CD4-positive, alpha-beta T cell (primary cell): ENCODE measurements at regions of chr3 and their contacts with region 1.

Region 1: DNA sequence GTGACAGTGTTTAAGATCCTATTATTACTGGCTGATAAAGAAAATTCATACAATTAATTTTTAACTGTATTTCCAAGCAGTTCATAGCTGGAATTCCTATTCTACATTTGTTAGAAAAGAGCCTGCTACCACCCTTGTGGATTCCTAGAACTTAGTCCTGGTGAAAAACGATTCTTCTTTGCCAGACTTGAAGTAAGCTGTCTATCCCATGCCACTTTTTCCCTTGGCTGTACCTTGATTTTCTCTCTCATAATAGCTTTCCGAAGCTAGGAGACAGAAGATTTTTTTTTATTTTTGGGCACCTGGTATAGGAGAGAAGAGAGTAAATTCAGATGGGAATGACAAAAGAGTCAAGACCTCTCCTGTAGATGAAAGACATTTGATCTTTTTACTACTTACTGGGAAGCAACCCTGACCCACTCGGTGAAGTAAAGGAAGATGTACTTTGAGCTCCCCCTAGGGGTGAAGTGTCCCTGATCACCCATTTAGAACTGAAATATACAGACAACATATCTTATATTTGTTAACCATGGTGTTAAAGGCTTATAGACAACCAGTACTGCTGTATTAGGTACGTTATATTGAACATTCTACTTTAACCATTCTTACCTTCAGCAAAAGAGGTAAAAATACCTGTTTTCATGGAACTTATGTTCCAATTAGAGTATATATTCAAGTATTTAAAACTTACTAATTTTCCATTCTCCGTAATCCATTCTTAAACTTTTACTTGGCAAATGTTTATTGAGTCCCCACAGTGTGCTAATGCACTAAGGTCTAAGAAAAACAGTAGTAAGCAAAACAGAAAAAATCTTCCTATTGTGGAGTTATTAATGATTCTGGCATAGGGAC is 36.2 kb upstream of the C3orf38 start:
- DNase-seq: peak in 13 of 14 experiments; percentile 4 to 84 (median 47)
- ATAC-seq: peak; percentile 96
- H3K4me3 ChIP-seq: no peak overlapping the region
- H3K4me3 Mint-ChIP-seq: no peak overlapping the region
- H3K27ac ChIP-seq: no peak overlapping the region
- H3K27ac Mint-ChIP-seq: peak overlapping the region; percentile 14
- H3K4me1 ChIP-seq: no peaks in the 10 kb centered on the region
- H3K4me1 Mint-ChIP-seq: peaks cover 30% of the 10 kb centered on the region
- H3K27me3 ChIP-seq: no peaks in the 10 kb centered on the region
- H3K27me3 Mint-ChIP-seq: no peaks in the 10 kb centered on the region
- CTCF ChIP-seq: peak; percentile 92

Region 2: DNA sequence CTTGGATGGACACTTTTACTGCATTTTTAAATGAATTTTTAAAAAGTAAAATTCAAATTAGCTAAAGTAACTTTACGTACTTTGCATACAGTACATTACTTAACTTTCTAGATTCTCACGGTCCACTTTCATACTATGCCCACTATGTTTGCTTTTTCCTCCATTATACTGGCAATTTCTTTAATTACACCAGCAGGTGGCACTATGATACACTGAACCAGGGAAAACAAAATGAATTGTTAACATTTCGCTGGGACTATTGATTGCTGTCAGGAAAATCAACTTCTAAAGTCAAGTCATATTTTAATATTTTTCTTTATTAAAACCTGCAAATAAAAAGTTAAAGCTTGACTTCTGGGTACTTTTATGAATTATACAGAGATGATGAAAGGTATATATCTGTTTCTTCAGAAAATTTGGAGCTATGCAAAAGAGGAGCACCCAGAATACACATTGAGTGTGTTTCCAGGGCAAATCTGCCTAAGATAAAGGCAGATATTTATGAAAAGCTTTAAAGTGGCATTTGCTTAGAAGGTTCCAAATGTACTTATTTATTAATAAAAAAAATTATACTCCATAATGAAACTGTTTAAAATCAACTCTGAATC is 815.3 kb before region 1 on chr3:
- CTCF ChIA-PET with region 1: no interaction called
- POLR2A ChIA-PET with region 1: no interaction called
- intact Hi-C with region 1: loop called in 1 of 2 experiments (anchors 1 kb)
- DNase-seq: peak in 3 of 14 experiments; percentile 34 to 49 (median 45)
- ATAC-seq: peak; percentile 59
- H3K4me3 ChIP-seq: no peak overlapping the region
- H3K4me3 Mint-ChIP-seq: no peak overlapping the region
- H3K27ac ChIP-seq: no peak overlapping the region
- H3K27ac Mint-ChIP-seq: no peak overlapping the region
- H3K4me1 ChIP-seq: no peaks in the 10 kb centered on the region
- H3K4me1 Mint-ChIP-seq: peaks cover 5% of the 10 kb centered on the region
- H3K27me3 ChIP-seq: no peaks in the 10 kb centered on the region
- H3K27me3 Mint-ChIP-seq: no peaks in the 10 kb centered on the region
- CTCF ChIP-seq: peak; percentile 90

Region 3: DNA sequence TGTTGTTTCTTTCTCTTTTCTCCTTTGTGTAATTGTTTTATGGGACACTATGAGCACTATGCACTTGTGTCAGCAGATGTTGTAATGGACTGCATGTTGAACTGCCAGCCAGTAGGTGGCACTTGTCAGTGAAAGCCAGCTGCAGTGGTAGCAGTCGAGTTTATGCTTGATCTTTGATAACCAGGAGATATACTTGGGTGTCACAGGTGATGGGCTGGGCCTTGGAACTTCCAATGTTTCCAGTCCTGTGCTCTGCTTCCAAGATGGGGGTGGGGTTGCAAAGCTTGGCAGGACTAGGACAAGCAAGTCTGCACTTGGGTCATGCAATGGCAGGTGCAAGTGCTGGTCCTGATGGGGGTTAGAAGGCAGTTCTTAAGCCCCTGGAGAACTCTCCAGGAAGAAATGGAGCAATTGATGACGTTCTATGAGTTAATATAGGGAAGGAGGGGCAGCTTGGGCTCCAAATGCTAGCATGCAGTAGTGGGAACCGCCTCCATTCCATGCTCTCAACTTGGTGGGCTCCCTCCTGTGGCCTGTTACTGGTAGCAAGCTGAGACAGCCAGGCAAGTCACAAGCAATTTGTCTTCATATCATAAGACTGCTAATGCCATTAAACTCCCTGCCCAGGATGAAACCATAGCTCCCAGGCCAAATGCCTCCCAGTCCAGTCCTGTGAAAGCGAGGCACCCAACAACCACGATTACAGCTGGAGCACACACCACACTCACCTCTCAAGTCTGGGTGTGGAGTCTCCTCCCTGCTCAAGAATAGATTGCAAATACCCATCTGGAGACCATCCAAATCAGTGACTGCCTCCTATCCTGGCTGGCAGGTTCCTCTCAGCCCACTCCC is 342.0 kb before region 1 on chr3:
- CTCF ChIA-PET with region 1: no interaction called
- POLR2A ChIA-PET with region 1: no interaction called
- intact Hi-C with region 1: loop called (anchors 1 to 5 kb)
- DNase-seq: peak in 12 of 14 experiments; percentile 6 to 70 (median 27)
- ATAC-seq: peak; percentile 78
- H3K4me3 ChIP-seq: no peak overlapping the region
- H3K4me3 Mint-ChIP-seq: no peak overlapping the region
- H3K27ac ChIP-seq: no peak overlapping the region
- H3K27ac Mint-ChIP-seq: no peak overlapping the region
- H3K4me1 ChIP-seq: no peaks in the 10 kb centered on the region
- H3K4me1 Mint-ChIP-seq: no peaks in the 10 kb centered on the region
- H3K27me3 ChIP-seq: no peaks in the 10 kb centered on the region
- H3K27me3 Mint-ChIP-seq: peaks cover 15% of the 10 kb centered on the region
- CTCF ChIP-seq: peak; percentile 64

Region 4: DNA sequence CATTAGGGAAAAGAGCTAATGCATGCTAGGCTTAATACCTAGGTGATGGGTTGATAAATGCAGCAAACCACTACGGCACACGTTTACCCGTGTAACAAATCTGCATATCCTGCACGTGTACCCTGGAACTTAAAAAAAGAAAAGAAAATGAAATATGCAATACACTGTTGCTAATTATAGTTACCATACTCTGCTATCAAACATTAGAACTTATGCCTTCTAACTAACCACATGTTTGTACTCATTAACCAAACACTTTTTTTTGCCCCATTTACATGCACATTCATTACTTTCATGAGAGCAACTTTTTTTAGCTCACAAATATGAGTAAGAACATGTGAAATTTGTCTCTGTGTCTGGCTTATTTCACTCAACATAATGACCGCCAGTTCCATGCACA is 307.9 kb before region 1 on chr3:
- CTCF ChIA-PET with region 1: no interaction called
- POLR2A ChIA-PET with region 1: no interaction called
- intact Hi-C with region 1: no loop called
- DNase-seq: no peak
- ATAC-seq: no peak
- H3K4me3 ChIP-seq: no peak overlapping the region
- H3K4me3 Mint-ChIP-seq: no peak overlapping the region
- H3K27ac ChIP-seq: no peak overlapping the region
- H3K27ac Mint-ChIP-seq: no peak overlapping the region
- H3K4me1 ChIP-seq: no peaks in the 10 kb centered on the region
- H3K4me1 Mint-ChIP-seq: peaks cover 6% of the 10 kb centered on the region
- H3K27me3 ChIP-seq: no peaks in the 10 kb centered on the region
- H3K27me3 Mint-ChIP-seq: peaks cover 5% of the 10 kb centered on the region
- CTCF ChIP-seq: no peak

Region 5: DNA sequence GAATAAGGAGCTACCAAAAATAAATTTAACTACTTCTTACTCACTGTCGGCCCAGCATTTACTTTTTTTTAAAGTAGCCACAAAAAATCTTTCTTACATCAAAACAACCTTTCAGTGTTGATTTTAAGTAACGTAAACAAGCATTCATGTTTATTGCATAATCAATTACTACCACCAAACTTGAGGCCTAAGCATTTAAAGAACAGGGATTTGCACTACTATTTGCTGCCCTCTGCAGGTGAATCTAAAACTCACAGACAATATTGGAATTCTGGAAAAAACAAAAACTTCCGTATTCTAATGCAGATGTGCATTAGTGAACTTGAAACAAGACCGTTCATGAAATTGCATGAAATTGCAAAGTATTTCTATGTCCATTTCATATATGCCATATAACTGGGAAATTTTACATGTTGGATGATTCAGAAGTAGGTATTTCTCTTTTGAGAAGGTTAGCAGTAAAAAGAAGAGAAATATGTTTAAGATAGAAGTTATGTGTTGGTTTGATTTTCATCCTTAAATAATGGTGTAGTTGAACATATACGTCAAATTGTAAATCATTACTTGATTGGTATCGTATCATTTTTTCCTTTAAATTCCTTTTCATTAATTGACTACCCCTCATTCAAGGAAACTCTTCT is 110.3 kb before region 1 on chr3:
- CTCF ChIA-PET with region 1: no interaction called
- POLR2A ChIA-PET with region 1: no interaction called
- intact Hi-C with region 1: loop called (anchors 5 to 10 kb)
- DNase-seq: peak in 4 of 14 experiments; percentile 26 to 61 (median 53)
- ATAC-seq: no peak
- H3K4me3 ChIP-seq: no peak overlapping the region
- H3K4me3 Mint-ChIP-seq: no peak overlapping the region
- H3K27ac ChIP-seq: no peak overlapping the region
- H3K27ac Mint-ChIP-seq: no peak overlapping the region
- H3K4me1 ChIP-seq: no peaks in the 10 kb centered on the region
- H3K4me1 Mint-ChIP-seq: peaks cover 12% of the 10 kb centered on the region
- H3K27me3 ChIP-seq: no peaks in the 10 kb centered on the region
- H3K27me3 Mint-ChIP-seq: peaks cover 5% of the 10 kb centered on the region
- CTCF ChIP-seq: peak; percentile 88